CD4-positive, alpha-beta memory T cell (primary cell): ENCODE measurements at regions of chr9 and their contacts with region 1.

Region 1: GRCh38 chr9:128455849-128456612 is at the start of gene ODF2:
- DNase-seq: peak; percentile 98
- H3K4me3 ChIP-seq: peak within 1 kb of the TSS; percentile 42 to 85
- H3K4me3 Mint-ChIP-seq: peak within 1 kb of the TSS; percentile 89 to 95 (median 92)
- H3K27ac ChIP-seq: peak within 1 kb of the TSS; percentile 85
- H3K27ac Mint-ChIP-seq: peak within 1 kb of the TSS; percentile 91 to 96 (median 93)
- H3K4me1 ChIP-seq: peaks cover 12% of the 10 kb centered on the region
- H3K4me1 Mint-ChIP-seq: peaks cover 4 to 22% (median 14%) of the 10 kb centered on the region in 4 donors
- H3K27me3 ChIP-seq: no peaks in the 10 kb centered on the region
- H3K27me3 Mint-ChIP-seq: no peaks in the 10 kb centered on the region
- total RNA-seq, gene ODF2: 32.3 to 33.6 TPM

Region 2: GRCh38 chr9:128275996-128276573 is 179.9 kb before region 1 on chr9 and contains the starts of genes GOLGA2 and SWI5:
- CTCF ChIA-PET with region 1: no interaction called
- POLR2A ChIA-PET with region 1: no interaction called
- intact Hi-C with region 1: loop called (anchors 1 kb)
- DNase-seq: peak; percentile 99 to 100 (median 100)
- H3K4me3 ChIP-seq: peak within 1 kb of the TSS; percentile 88
- H3K4me3 Mint-ChIP-seq: peak within 1 kb of the TSS; percentile 94 to 98 (median 97)
- H3K27ac ChIP-seq: peak within 1 kb of the TSS; percentile 82
- H3K27ac Mint-ChIP-seq: peak within 1 kb of the TSS; percentile 92 to 99 (median 97)
- H3K4me1 ChIP-seq: peaks cover 28% of the 10 kb centered on the region
- H3K4me1 Mint-ChIP-seq: peaks cover 17 to 43% (median 32%) of the 10 kb centered on the region in 4 donors
- H3K27me3 ChIP-seq: no peaks in the 10 kb centered on the region
- H3K27me3 Mint-ChIP-seq: no peaks in the 10 kb centered on the region
- total RNA-seq, gene GOLGA2: 76.4 to 82.4 TPM
- total RNA-seq, gene SWI5: 11.5 to 14.9 TPM

Region 3: GRCh38 chr9:128420060-128420650 is 35.9 kb before region 1 on chr9:
- CTCF ChIA-PET with region 1: interaction called, 4 read pairs
- POLR2A ChIA-PET with region 1: no interaction called
- intact Hi-C with region 1: loop called (anchors 1 kb)
- DNase-seq: peak; percentile 51 to 59 (median 57)
- H3K4me3 ChIP-seq: peak overlapping the region; percentile 29 to 58
- H3K4me3 Mint-ChIP-seq: peak overlapping the region; percentile 77 to 87 (median 84)
- H3K27ac ChIP-seq: peak overlapping the region; percentile 21
- H3K27ac Mint-ChIP-seq: peak overlapping the region in 1 of 7 donors; percentile 70
- H3K4me1 ChIP-seq: peaks cover 14% of the 10 kb centered on the region
- H3K4me1 Mint-ChIP-seq: peaks cover 0 to 13% (median 8%) of the 10 kb centered on the region in 4 donors
- H3K27me3 ChIP-seq: peaks cover 16% of the 10 kb centered on the region
- H3K27me3 Mint-ChIP-seq: peaks cover 17 to 24% of the 10 kb centered on the region in 2 donors

Region 4: DNA sequence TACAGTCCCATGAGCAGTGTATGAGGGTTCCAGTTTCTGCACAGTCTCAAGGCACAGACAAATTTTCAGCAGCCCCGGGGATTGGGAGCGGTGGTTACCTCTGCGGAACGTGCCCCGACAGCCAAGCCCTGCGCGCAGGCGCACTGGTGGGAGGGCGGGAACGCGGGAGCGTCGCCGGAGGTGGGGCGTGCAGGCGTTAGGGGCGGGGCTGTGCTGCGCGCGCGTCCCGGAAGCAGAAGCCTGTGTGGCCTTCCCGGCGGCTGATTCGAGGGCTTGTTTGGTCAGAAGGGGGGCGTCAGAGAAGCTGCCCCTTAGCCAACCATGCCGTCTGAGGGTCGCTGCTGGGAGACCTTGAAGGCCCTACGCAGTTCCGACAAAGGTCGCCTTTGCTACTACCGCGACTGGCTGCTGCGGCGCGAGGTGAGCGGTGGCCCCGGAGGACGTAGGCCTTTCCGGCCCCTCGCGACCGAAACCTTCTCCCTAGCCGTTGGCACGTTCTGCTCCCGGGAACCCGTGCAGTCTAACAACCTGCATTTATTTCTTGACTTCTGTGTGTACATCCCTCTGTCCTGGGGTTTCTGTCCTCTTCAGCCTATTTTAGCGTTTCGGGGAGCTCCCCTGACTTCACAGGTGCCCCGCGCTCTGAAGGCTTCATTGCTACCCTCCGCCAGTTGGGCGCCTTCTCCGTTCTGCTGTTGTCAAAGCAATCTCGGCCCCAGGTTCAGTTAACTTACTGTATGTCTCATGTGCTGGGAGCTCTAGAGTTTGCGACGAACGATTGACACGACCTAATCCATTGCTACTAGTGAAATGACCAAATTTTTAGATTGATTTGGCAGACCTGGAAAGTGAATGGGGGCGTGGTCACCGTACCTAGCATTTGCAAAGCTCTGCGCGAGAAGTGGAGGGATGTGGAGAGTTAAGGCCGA is 48.7 kb after region 1 on chr9 and contains the start of gene GLE1:
- CTCF ChIA-PET with region 1: no interaction called
- POLR2A ChIA-PET with region 1: interaction called, 4 read pairs
- intact Hi-C with region 1: loop called (anchors 1 kb)
- DNase-seq: peak; percentile 92 to 96 (median 95)
- H3K4me3 ChIP-seq: peak within 1 kb of the TSS; percentile 96 to 100
- H3K4me3 Mint-ChIP-seq: peak within 1 kb of the TSS; percentile 96 to 100 (median 99)
- H3K27ac ChIP-seq: peak within 1 kb of the TSS; percentile 91
- H3K27ac Mint-ChIP-seq: peak within 1 kb of the TSS; percentile 96 to 100 (median 99)
- H3K4me1 ChIP-seq: peaks cover 21% of the 10 kb centered on the region
- H3K4me1 Mint-ChIP-seq: peaks cover 13 to 45% (median 25%) of the 10 kb centered on the region in 4 donors
- H3K27me3 ChIP-seq: no peaks in the 10 kb centered on the region
- H3K27me3 Mint-ChIP-seq: no peaks in the 10 kb centered on the region
- total RNA-seq, gene GLE1: 31.1 to 32.2 TPM

Region 5: DNA sequence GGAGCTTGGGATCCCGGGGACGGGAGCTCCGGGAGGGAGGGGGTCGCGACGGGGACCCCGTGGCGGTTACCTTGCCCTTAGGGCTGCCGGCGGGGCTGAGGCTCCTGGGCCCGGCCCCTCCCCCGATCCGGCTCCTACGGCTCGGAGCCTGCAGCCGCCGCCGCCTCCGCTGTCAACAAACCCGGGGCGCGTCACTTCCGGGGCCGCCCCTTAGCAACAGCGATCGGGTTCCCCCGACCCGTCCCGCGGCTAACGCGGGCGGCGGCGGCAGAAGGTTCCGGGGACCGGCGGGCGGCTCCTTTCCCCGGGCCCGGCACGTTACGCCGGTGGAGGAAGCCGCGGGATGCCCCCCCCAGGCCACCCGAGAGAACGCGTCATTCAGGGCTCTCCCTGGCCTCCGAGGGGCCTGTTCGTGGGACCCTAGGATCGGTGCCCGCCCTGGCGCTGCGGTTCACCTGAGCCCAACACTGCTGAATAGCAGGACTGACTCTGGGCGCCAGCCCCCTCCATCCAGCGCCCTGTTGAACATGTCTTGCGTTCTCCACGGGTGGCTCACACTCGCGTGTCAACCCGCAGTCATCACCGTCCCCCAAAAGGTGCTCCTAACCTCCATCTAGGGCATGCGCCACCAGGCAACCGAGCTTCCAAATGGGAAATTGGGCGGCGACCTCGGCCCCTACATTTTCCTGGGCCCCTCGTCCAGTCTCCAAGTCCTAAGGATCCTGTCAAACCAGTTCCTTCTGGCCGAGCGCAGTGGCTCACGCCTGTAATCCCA is 315.9 kb after region 1 on chr9 and contains the start of gene ZER1:
- CTCF ChIA-PET with region 1: no interaction called
- POLR2A ChIA-PET with region 1: interaction called, 3 read pairs
- intact Hi-C with region 1: loop called (anchors 5 kb)
- DNase-seq: peak; percentile 93 to 95 (median 94)
- H3K4me3 ChIP-seq: peak within 1 kb of the TSS; percentile 73 to 98
- H3K4me3 Mint-ChIP-seq: peak within 1 kb of the TSS; percentile 96 to 99 (median 98)
- H3K27ac ChIP-seq: peak within 1 kb of the TSS; percentile 96
- H3K27ac Mint-ChIP-seq: peak within 1 kb of the TSS; percentile 92 to 99 (median 99)
- H3K4me1 ChIP-seq: peaks cover 32% of the 10 kb centered on the region
- H3K4me1 Mint-ChIP-seq: peaks cover 19 to 38% (median 26%) of the 10 kb centered on the region in 4 donors
- H3K27me3 ChIP-seq: no peaks in the 10 kb centered on the region
- H3K27me3 Mint-ChIP-seq: no peaks in the 10 kb centered on the region
- total RNA-seq, gene ZER1: 37.9 to 44.2 TPM